Left ventricle myocardium superior (tissue), 1 donor: ENCODE measurements at regions of chr19 and their contacts with region 1.

Region 1: DNA sequence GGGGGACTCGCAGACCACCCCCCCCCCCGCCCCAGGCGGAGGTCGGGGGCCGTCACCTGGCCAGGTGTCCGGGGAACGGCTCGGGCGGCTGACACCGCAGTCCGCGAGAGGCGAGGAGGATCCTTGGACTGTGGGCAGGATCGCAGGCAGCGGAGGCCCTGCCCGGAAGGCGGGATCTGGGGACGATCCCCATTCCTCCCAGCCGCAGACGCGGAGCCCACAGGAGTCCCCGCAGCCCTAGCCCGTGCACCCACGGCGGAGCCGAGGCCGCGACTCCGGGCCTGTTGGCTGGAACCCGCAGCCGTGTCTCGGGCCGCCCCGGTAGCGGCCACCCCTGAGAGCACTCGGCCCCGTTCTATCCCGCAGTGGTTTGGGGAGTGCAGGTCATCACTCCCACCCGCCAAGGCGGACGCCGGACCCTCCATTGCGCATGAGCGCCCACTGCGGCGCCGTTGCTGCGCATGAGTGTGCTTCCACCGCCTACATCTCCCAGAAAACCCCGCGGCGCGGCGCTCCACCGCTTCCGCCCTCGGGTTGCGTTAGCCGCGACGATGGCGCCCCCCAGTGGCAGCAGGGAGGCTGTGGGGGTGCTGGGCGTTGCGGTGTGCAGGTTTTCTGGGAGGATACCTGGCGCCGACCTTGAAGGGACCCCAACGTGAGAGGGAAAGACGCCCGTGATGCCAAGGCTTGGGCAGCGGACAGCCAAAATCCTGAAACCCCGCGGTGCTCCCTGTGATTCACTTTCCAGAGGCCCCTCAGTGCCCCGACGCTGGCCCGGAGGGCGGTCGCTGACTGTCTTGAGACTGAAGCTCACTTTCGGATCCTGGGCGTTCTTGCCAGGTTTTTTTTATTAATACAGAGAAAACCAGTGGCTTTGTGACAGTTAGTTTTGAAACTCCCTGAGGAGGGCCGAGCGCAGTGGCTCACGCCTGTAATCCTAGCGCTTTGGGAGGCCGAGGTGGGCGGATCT is 4.4 kb upstream of the ZNF329 start:
- DNase-seq: peak; percentile 99
- ATAC-seq: peak; percentile 98

Region 2: GRCh38 chr19:58009666-58010371 is 145.1 kb before region 1 on chr19:
- intact Hi-C with region 1: loop called (anchors 5 kb)
- DNase-seq: peak; percentile 93
- ATAC-seq: peak; percentile 97